Endothelial cell of umbilical vein (primary cell): ENCODE measurements at regions of chr12 and their contacts with region 1.

Region 1: GRCh38 chr12:106136263-106136662 is 2.5 kb downstream of the NUAK1 start:
- DNase-seq: peak; percentile 90
- H3K4me3 ChIP-seq: peak overlapping the region in 2 of 3 experiments; percentile 72 to 73
- H3K27ac ChIP-seq: peak overlapping the region; percentile 77
- H3K4me1 ChIP-seq: peaks cover 67% of the 10 kb centered on the region
- H3K27me3 ChIP-seq: no peaks in the 10 kb centered on the region
- CTCF ChIP-seq: peak; percentile 75 to 76
- POLR2A ChIP-seq: no peak

Region 2: DNA sequence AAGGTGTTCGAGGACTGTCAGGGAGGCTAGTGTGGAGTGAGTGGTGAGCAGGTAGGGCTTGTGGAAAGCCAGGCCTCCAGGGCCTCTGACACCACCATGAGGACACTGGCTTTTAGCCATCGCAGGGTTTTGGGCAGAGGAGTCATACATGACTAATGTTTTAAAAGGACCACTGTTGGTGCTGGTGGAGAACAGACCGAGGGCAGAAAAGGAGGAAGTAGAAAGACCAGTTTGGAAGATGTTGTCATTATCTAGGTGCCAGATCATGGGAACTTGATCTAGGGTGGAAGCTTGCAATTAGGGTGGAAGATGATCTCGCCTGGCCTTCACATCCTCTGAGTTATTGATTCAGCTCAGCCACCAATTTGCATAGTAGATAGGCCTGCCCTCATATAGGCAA is 661.6 kb before region 1 on chr12:
- CTCF ChIA-PET with region 1: interaction called, 6 read pairs
- POLR2A ChIA-PET with region 1: no interaction called
- dilution Hi-C with region 1: no loop called
- intact Hi-C with region 1: loop called (anchors 5 kb)
- DNase-seq: peak; percentile 62
- H3K4me3 ChIP-seq: no peak overlapping the region
- H3K27ac ChIP-seq: peak overlapping the region; percentile 4
- H3K4me1 ChIP-seq: peaks cover 67% of the 10 kb centered on the region
- H3K27me3 ChIP-seq: no peaks in the 10 kb centered on the region
- CTCF ChIP-seq: no peak
- POLR2A ChIP-seq: no peak

Region 3: DNA sequence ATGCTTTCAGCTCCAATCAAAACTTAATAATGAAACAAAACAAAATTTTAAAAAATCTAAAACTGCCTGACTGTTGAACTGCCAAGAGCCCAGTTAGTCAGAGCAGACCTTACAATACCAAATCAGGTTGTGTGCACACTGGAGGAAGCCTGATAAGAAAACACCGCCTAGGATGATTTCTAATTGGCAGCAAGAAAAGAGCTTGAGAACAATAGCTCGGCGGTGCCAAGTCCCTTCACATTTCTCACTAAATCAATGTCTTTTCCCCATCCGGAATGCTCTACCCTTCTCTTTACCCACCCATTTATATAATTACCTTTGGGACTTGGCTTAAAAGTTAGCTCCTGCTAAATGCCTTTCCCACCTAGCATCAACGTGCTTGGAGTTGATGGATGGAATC is 549.0 kb before region 1 on chr12:
- CTCF ChIA-PET with region 1: interaction called, 13 read pairs
- POLR2A ChIA-PET with region 1: no interaction called
- dilution Hi-C with region 1: no loop called
- intact Hi-C with region 1: loop called (anchors 2 kb)
- DNase-seq: peak; percentile 94
- H3K4me3 ChIP-seq: no peak overlapping the region
- H3K27ac ChIP-seq: peak overlapping the region; percentile 51
- H3K4me1 ChIP-seq: peaks cover 29% of the 10 kb centered on the region
- H3K27me3 ChIP-seq: no peaks in the 10 kb centered on the region
- CTCF ChIP-seq: no peak
- POLR2A ChIP-seq: peak; percentile 59

Region 4: DNA sequence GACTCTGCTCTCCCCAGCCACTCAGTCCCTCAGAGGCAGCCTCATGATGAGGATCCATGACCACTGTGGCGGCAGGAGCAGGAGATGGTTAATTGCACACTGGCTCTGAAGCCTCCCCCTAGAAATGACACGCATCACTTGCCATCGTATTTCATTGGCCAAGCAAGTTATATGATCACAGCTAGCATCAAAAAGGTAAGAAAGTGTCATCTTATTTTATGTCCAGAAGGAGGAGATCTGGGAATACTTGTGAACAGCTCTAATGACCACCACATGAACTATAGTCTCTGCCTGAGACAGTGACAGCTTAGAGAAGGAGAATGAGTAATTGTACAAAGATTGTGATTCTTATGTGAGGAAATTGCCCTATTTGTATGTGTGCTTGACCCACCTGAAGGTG is 360.9 kb before region 1 on chr12:
- CTCF ChIA-PET with region 1: interaction called, 35 read pairs
- POLR2A ChIA-PET with region 1: no interaction called
- dilution Hi-C with region 1: no loop called
- intact Hi-C with region 1: no loop called
- DNase-seq: peak; percentile 19
- H3K4me3 ChIP-seq: no peak overlapping the region
- H3K27ac ChIP-seq: no peak overlapping the region
- H3K4me1 ChIP-seq: no peaks in the 10 kb centered on the region
- H3K27me3 ChIP-seq: peaks cover 4 to 14% of the 10 kb centered on the region in 2 experiments
- CTCF ChIP-seq: no peak
- POLR2A ChIP-seq: no peak

Region 5: DNA sequence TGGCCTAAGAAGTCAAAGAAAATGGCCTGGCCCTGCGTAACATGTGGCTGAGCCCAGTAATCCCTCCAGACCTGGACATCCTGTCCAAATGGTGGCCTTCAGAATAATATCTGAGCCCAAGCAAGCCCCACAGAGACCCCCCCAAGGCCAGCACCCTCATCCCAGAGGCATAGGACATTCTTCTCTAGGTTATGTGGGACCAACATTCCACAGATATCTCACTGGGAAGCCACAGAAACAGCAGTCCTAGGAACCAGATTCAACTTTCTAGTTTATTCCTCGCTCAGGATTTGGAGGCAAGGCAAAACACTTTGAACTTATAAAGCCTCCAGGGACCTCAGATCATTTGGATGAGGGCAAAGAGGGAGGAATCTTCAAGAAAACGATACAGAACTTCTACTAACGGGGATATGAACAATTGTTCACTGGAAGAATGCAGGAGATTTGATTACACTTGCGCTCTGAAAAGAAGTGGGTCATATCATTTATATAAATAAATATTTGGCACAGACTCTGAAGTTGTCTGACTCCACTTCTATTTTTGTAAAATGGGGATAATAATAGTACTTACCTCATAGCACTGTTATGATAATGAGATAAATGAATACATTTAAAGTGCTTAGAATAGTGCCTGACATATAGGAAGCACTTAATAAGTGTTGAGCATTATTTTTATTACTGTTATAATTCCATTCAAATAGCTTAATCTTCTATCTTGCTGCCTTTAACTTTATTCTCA is 169.1 kb before region 1 on chr12:
- CTCF ChIA-PET with region 1: no interaction called
- POLR2A ChIA-PET with region 1: no interaction called
- dilution Hi-C with region 1: no loop called
- intact Hi-C with region 1: loop called (anchors 1 kb)
- DNase-seq: peak; percentile 18
- H3K4me3 ChIP-seq: no peak overlapping the region
- H3K27ac ChIP-seq: peak overlapping the region; percentile 18
- H3K4me1 ChIP-seq: peaks cover 4% of the 10 kb centered on the region
- H3K27me3 ChIP-seq: no peaks in the 10 kb centered on the region
- CTCF ChIP-seq: no peak
- POLR2A ChIP-seq: no peak

Region 6: DNA sequence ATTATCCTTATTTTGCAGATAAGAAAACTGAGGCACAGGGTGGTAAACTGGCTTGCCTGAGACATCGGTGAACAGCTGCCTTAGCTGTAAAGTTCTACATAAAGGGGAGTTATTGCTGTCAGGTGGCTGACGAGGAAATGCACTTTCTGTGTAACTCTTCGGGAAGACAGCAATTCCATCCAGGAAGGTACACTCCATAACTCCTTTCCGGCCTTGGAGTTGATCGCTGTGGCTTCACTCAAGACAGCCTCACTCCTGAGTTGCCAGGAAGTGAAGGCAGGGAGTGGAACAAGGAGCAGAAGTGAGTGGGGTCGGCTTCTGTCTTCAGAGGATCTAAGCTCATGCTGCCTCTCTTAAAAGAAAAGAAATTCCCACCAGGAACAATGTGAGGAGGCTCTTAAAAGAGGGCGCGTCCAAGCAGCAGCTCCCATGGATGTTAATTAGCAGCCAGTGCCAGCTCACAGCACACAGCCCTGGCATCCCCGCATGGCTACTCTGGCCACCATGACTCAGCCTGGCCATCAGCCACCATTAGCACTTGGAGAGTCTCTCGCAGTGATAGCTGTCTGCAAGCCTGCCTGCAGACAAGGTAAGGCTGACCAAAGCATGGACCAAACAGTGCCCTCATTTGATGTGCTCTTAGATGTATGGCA is 57.8 kb before region 1 on chr12:
- CTCF ChIA-PET with region 1: interaction called, 10 read pairs
- POLR2A ChIA-PET with region 1: no interaction called
- dilution Hi-C with region 1: no loop called
- intact Hi-C with region 1: loop called (anchors 1 kb)
- DNase-seq: peak; percentile 77
- H3K4me3 ChIP-seq: no peak overlapping the region
- H3K27ac ChIP-seq: peak overlapping the region; percentile 62
- H3K4me1 ChIP-seq: peaks cover 32% of the 10 kb centered on the region
- H3K27me3 ChIP-seq: no peaks in the 10 kb centered on the region
- CTCF ChIP-seq: no peak
- POLR2A ChIP-seq: no peak

Region 7: GRCh38 chr12:106149096-106149784 is 13.0 kb after region 1 on chr12:
- CTCF ChIA-PET with region 1: interaction called, 100 read pairs
- POLR2A ChIA-PET with region 1: no interaction called
- dilution Hi-C with region 1: no loop called
- intact Hi-C with region 1: no loop called
- DNase-seq: peak; percentile 59
- H3K4me3 ChIP-seq: no peak overlapping the region
- H3K27ac ChIP-seq: no peak overlapping the region
- H3K4me1 ChIP-seq: peaks cover 17% of the 10 kb centered on the region
- H3K27me3 ChIP-seq: no peaks in the 10 kb centered on the region
- CTCF ChIP-seq: peak; percentile 55 to 68
- POLR2A ChIP-seq: no peak

Region 8: GRCh38 chr12:106176560-106176959 is 40.3 kb after region 1 on chr12:
- CTCF ChIA-PET with region 1: no interaction called
- POLR2A ChIA-PET with region 1: no interaction called
- dilution Hi-C with region 1: no loop called
- intact Hi-C with region 1: no loop called
- DNase-seq: no peak
- H3K4me3 ChIP-seq: no peak overlapping the region
- H3K27ac ChIP-seq: no peak overlapping the region
- H3K4me1 ChIP-seq: no peaks in the 10 kb centered on the region
- H3K27me3 ChIP-seq: peaks cover 13% of the 10 kb centered on the region in 2 experiments
- CTCF ChIP-seq: no peak
- POLR2A ChIP-seq: no peak